ENCODE measurements at regions of chr1 and their contacts with region 1.

Region 1: GRCh38 chr1:81549604-81550127 is 251.1 kb upstream of the ADGRL2 start:
- DNase-seq: no peak
- H3K4me3 ChIP-seq: no peak overlapping the region
- H3K27ac ChIP-seq: no peak overlapping the region
- H3K4me1 ChIP-seq: peaks cover 1 to 22% (median 12%) of the 10 kb centered on the region in 4 experiments
- H3K27me3 ChIP-seq: no peaks in the 10 kb centered on the region
- CTCF ChIP-seq: peak in 2 of 3 experiments; percentile 49 to 72; a peak in 2 of 4 replicates
- EP300 ChIP-seq: no peak
- POLR2A ChIP-seq: no peak
- RAD21 ChIP-seq: peak; percentile 85 to 90

Region 2: DNA sequence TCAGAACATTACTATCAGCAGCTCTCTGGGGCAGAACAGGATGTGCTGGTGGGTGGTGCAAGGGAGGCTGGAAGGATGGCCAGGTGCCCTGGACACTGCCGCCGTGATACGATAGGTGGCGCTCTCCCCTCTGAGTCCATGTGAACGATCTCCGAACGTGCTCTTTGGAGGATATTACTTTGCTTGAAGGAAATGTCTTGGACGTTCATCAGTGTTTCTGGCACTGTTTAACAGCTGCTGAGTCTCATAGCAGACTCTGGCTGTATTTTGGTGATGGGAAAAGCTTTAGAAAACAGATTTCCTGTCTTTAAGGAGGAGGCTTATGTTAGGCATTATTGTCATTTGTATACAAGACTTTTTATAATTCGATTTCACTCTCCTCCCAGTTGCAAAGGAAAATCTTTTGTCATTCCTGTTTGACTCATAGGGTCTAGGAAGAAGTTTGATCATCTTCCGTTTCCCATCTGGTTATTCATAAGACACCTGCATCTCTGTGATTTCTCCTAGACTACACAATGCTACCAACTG is 135.1 kb before region 1 on chr1:
- CTCF ChIA-PET with region 1: interaction called, 34 read pairs
- POLR2A ChIA-PET with region 1: no interaction called
- DNase-seq: peak; percentile 57 to 96
- H3K4me3 ChIP-seq: no peak overlapping the region
- H3K27ac ChIP-seq: no peak overlapping the region; the same call in 1 of the 2 replicates
- H3K4me1 ChIP-seq: peaks cover 0 to 14% (median 6%) of the 10 kb centered on the region in 4 experiments; a peak in 4 of 7 replicates
- H3K27me3 ChIP-seq: no peaks in the 10 kb centered on the region
- CTCF ChIP-seq: peak; percentile 80 to 99 (median 99)
- EP300 ChIP-seq: no peak
- POLR2A ChIP-seq: no peak
- RAD21 ChIP-seq: peak; percentile 88 to 93

Region 3: GRCh38 chr1:81559662-81560350 is 10.1 kb after region 1 on chr1:
- CTCF ChIA-PET with region 1: interaction called, 12 read pairs
- POLR2A ChIA-PET with region 1: no interaction called
- DNase-seq: no peak
- H3K4me3 ChIP-seq: no peak overlapping the region
- H3K27ac ChIP-seq: no peak overlapping the region
- H3K4me1 ChIP-seq: peaks cover 0 to 4% (median 2%) of the 10 kb centered on the region in 4 experiments; a peak in 2 of 7 replicates
- H3K27me3 ChIP-seq: no peaks in the 10 kb centered on the region
- CTCF ChIP-seq: no peak
- EP300 ChIP-seq: no peak
- POLR2A ChIP-seq: no peak
- RAD21 ChIP-seq: 0 out of 4 replicates have a peak, but pooled peaks of 1 of the 2 experiments have one; percentile 2

Region 4: DNA sequence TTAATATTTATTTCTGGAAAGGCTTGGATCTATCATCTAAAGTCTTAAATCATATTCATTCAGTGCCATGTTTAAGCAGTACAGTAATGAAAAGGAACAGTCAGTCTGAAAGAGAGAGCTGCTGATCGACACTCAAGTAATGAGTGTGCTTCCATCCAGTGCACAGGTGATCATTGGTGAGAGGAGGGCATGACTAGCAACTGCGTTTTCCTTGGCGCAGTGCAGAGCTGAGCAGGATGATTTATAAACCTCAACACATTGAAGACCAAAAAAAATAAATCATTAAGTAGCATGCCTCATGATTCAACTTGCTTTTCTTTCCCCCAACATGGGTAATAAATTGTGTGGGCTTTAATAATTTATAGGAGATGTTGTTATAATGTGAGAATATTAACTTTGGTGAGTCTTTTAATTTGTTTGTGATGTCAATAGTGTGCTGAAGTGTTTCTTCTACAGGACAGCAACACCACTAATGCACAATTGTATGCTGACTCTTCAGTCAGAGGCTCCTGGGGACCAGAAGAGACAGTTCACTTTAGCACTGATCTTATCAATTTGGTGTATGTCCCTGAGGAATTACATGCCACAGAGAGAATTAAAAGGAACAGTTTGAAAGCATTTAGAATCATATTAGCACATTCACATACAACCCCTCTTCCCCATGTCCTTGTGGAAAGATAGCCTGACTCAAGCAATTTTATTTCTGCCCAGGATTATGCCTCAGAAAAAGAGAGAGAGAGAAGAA is 51.4 kb after region 1 on chr1:
- CTCF ChIA-PET with region 1: no interaction called
- POLR2A ChIA-PET with region 1: no interaction called
- DNase-seq: no peak
- H3K4me3 ChIP-seq: no peak overlapping the region
- H3K27ac ChIP-seq: no peak overlapping the region
- H3K4me1 ChIP-seq: peaks cover 3 to 14% (median 6%) of the 10 kb centered on the region in 4 experiments; a peak in 6 of 7 replicates
- H3K27me3 ChIP-seq: no peaks in the 10 kb centered on the region
- CTCF ChIP-seq: no peak
- EP300 ChIP-seq: no peak
- POLR2A ChIP-seq: no peak
- RAD21 ChIP-seq: no peak

Region 5: GRCh38 chr1:81800695-81801650 is 251.3 kb after region 1 on chr1 and contains the start of gene ADGRL2:
- CTCF ChIA-PET with region 1: interaction called, 18 read pairs
- POLR2A ChIA-PET with region 1: interaction called, 9 read pairs
- DNase-seq: peak in 1 of 2 experiments; percentile 86
- H3K4me3 ChIP-seq: peak within 1 kb of the TSS; percentile 65 to 99 (median 92)
- H3K27ac ChIP-seq: peak within 1 kb of the TSS; percentile 83
- H3K4me1 ChIP-seq: peaks cover 0 to 15% (median 1%) of the 10 kb centered on the region in 4 experiments; a peak in 4 of 7 replicates
- H3K27me3 ChIP-seq: peaks cover 0 to 1% (median 0%) of the 10 kb centered on the region in 4 experiments; a peak in 1 of 7 replicates
- CTCF ChIP-seq: no peak
- EP300 ChIP-seq: peak; percentile 11 to 46; a peak in 2 of 3 replicates
- POLR2A ChIP-seq: peak; percentile 66 to 75
- RAD21 ChIP-seq: peak in 1 of 2 experiments; percentile 21; a peak in 2 of 4 replicates
- total RNA-seq, gene ADGRL2: 121 and 124 TPM in 2 replicates